ENCODE measurements at regions of chr3 and their contacts with region 1.

Region 1: GRCh38 chr3:185498503-185499396 is at the start of gene TMEM41A:
- DNase-seq: peak; percentile 87
- H3K4me3 Mint-ChIP-seq: peak within 1 kb of the TSS; percentile 91
- H3K27ac Mint-ChIP-seq: peak within 1 kb of the TSS; percentile 91
- H3K4me1 Mint-ChIP-seq: peaks cover 12% of the 10 kb centered on the region
- H3K27me3 Mint-ChIP-seq: peaks cover 5% of the 10 kb centered on the region
- total RNA-seq, gene TMEM41A: 23.5 and 24.7 TPM in 2 replicates

Region 2: DNA sequence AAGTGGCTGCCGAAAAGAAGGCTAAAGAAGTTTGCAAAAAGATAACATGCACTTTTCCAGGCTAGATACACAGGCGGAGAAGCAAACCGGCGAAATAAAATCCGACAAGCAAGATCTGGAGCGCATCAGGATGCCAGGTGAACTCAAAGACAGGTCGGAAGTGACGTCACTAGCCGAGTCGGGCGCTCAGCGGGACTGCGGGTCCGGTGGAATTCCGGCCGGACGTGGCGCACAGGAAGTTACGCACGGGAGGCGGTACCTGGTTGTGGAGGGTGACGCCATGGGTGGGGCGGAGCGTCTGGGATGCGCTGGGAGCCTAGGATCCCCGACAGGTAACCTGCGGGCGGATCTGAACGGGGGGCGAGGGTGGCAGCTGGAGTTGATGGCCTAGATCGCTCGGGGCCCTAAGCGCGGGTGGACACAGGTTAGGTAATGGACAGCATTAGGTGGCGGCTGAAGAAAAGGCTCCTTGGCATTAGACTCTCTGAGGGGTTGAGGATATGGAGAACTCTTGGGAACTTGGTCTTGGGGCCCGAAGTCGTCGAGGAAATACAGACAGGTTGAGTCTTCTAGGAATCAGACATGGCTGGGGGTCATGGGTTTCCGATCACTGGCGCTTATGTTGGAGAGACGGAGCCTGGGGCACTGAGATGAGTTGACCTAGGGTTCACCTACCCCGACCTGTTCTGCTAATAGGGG is 215.9 kb before region 1 on chr3:
- intact Hi-C with region 1: loop called (anchors 1 kb)
- DNase-seq: peak; percentile 90
- H3K4me3 Mint-ChIP-seq: peak overlapping the region; percentile 96
- H3K27ac Mint-ChIP-seq: peak overlapping the region; percentile 84
- H3K4me1 Mint-ChIP-seq: peaks cover 17% of the 10 kb centered on the region
- H3K27me3 Mint-ChIP-seq: peaks cover 3% of the 10 kb centered on the region

Region 3: DNA sequence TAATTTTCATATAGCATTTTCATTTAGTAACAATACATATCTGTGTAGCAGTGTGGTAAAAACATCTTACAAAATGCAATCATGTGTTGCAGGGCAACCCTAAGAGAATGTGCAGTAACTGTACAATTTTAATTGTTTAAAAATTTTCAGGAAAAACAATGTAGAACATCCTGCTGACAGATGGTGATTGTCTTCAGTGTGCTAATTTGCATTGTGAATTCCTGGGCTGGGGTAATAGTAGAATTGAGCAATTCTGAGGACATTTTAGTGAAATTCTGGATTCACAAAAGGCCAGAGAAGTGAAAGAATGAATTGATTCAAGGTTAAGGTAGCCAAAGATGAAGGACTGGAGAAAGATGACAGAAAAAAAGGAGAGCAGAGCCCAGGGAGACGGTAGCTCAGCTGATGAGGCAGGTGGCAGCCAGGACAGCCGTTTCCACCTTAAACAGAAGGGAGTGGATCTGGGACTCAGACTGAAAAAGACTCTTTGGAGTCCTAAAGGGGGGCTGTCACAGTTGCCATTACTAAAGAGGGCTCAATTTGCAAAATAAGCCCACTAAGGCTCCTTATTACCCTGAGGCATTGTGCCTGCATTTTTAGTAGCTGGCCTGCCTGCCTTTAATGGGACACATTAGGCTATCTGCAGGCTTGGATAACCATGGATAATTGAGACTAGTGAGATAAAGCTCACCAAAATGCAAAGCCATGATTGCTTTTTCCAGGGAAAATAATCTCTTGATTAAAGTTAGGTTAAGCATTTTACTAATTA is 127.3 kb before region 1 on chr3:
- intact Hi-C with region 1: no loop called
- DNase-seq: no peak
- H3K4me3 Mint-ChIP-seq: no peak overlapping the region
- H3K27ac Mint-ChIP-seq: no peak overlapping the region
- H3K4me1 Mint-ChIP-seq: no peaks in the 10 kb centered on the region
- H3K27me3 Mint-ChIP-seq: peaks cover 25% of the 10 kb centered on the region

Region 4: DNA sequence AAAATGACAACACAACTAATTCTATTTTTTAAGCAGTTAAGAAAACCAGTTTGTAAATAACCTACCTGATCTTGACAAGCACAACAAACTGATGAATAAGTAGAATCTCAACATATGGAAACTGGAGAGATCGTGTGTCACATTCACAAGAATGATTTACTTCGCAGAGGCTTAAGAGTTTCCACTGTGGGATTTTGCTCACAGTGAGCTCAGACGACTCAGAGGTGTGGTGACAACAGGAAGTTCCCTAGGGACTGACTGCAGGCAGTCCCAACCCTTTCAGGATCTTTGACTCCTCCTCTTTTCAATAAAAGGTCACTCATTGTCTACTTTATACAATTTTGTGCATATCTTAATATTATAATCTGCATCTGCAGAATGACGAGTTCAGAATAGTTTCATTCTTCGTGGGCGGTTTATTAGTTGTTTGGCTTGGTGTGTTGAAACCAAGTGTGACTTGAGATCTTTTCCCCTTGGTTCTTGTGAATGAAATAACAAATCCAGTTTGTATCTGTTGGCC is 53.7 kb after region 1 on chr3 and contains the start of gene LIPH:
- intact Hi-C with region 1: loop called (anchors 10 kb)
- DNase-seq: no peak
- H3K4me3 Mint-ChIP-seq: no peak within 1 kb of the TSS
- H3K27ac Mint-ChIP-seq: no peak within 1 kb of the TSS
- H3K4me1 Mint-ChIP-seq: peaks cover 11% of the 10 kb centered on the region
- H3K27me3 Mint-ChIP-seq: no peaks in the 10 kb centered on the region
- total RNA-seq, gene LIPH: not detected in 2 replicates

Region 5: DNA sequence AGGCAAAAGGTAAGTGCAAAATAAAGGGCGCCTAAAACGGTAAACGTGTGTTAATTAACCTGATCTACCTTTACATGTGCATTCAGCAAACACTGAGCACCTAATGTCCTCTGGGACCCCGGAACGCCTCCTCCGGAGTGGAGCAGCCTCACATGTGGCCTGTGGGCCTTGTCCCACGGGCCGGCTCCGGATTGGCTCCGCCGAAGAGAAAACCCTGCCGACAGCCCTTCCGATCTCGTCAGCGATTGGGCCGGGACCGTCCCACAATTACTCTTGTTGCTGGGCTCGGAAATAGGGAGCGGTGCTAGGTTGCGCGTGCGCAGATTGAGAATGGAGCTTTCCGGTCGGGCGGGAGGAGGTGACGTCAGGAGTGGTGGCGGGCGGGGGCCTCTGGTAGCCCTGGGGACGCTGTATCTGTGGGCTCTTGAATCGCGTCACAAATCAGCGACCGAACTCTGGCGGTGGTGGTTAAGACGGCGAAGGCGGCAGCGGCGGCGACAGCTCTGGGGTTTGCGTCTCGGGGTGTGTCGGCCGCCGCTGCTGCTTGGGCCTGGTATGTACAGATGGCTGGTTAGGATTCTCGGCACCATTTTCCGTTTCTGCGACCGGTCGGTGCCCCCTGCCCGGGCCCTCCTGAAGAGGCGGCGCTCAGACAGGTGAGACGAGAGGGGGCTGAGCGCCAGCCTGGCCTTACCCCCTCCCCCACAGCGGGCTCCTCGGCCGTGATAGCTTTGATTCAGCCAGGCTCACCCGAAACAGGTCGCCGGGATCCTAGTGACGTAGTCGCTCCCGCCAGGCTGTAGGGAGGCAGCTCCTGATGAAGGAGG is 87.3 kb after region 1 on chr3 and contains the start of gene SENP2:
- intact Hi-C with region 1: loop called (anchors 1 kb)
- DNase-seq: peak; percentile 100
- H3K4me3 Mint-ChIP-seq: peak within 1 kb of the TSS; percentile 82
- H3K27ac Mint-ChIP-seq: peak within 1 kb of the TSS; percentile 87
- H3K4me1 Mint-ChIP-seq: peaks cover 17% of the 10 kb centered on the region
- H3K27me3 Mint-ChIP-seq: no peaks in the 10 kb centered on the region
- total RNA-seq, gene SENP2: 31.5 and 34.2 TPM in 2 replicates

Region 6: DNA sequence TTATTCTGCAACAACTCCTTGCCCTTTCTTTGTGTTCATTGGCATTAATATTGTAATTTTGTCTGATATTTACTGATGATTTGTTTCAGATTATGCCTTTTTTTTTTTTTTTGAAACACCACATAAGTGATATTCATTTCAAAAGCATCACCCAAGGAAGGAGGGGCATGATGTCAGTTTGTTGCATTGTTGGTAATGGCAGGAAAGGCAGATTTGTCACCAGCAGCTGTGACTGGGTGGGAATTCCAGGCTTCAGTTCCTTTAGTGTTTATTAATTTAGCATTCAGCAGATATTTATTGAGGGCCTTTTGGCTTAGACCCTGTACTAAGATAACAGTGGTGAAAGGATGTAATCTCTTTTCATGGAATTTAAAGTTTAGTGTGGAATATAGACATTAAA is 106.8 kb after region 1 on chr3:
- intact Hi-C with region 1: no loop called
- DNase-seq: no peak
- H3K4me3 Mint-ChIP-seq: no peak overlapping the region
- H3K27ac Mint-ChIP-seq: no peak overlapping the region
- H3K4me1 Mint-ChIP-seq: no peaks in the 10 kb centered on the region
- H3K27me3 Mint-ChIP-seq: no peaks in the 10 kb centered on the region

Measured in activated T-helper 2 cell treated with anti-CD3 and anti-CD28 coated beads, Interferon-gamma antibody, Interleukin-2, Interleukin-4, amounts not matched to agents 10 μg/mL and 5 μg/mL and 100 μg/mL, durations not matched to agents 14 hours and 24 hours and 36 hours (primary cell).